ENCODE measurements at regions of chr11 and their contacts with region 1.

Region 1: DNA sequence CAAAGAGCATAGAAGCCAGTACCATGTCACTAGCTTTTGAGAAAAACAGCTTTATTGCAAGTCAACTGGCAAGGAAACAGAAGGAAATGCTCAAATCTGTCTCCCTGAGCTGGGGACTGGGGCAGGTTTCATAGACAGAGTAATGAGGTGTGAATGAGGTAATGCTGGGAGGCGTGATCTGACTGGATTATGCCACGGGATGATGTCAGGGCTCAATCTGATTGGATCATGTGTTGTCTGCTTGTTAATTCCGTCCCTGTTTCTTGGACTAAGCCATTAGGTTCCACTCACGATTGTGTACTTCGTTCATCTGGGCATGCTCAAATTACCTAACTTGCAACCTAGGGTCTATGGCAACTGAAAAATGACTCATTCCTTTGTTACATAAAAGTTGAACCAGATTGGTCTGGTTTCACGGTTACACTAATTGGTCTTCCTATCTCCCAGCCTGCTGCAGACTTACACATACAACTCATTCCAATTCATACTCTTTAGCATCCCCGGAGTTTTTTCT is 20.2 kb upstream of the OR10A5 start:
- DNase-seq: no peak
- H3K27ac ChIP-seq: no peak overlapping the region
- CTCF ChIP-seq: no peak

Region 2: DNA sequence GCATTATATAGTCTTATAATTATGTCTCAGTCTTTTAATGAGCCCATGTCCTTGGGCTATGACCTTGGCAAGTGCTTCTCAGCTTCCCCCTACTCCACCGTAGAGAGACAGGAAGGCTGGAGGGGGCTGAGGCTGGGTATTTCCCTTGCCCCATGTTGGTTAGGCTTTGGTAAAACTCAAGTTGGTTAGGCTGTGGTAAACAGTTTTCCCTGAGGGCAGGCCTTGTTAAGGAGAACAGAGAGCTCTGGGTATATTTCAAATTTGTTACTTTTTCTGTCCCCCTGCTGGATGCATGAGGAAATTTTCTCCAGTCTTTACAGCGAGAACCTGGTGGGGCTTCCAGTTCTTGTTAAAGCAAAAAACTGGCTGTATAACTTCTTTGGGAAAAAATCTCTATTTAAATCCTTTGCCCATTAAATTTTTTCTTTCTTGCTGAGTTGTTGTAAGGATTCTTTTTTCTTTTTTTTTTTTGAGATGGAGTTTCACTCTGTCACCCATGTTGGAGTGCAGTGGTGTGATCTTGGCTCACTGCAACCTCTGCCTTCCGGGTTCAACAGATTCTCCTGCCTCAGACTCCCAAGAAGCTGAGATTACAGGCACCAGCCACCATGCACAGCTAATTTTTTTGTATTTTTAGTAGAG is 157.4 kb before region 1 on chr11:
- CTCF ChIA-PET with region 1: interaction called, 10 read pairs
- POLR2A ChIA-PET with region 1: no interaction called
- DNase-seq: peak; percentile 19
- H3K27ac ChIP-seq: no peak overlapping the region
- CTCF ChIP-seq: peak; percentile 42

Region 3: DNA sequence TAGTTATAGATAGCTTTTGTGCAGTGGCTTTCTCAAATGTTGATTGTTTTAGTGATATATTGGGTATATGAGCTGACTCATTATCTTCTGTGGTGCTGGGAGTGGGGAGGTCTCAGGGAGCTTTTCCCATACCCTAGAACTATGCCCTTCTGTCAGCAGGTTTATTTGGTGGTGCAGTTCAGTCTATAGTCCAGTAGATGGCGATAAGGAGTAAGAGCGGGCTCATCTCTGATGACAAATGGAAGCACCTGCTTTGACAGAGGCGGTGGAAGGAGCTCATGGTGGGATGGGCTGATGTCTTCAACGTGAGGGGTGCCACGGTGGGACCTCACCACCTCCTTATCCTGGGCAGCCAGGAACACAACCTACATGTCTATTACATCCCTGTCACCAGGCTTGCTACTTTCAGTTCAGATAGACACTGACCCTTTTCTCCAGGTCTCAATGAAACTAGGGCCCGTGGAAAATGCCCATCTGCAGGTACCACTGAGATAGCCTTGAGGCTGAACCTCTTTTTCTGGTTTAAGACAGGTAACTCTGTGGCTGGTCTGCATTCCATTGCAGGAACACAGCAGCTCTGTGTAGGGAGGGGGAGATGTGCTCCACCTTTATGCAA is 12.8 kb before region 1 on chr11:
- CTCF ChIA-PET with region 1: interaction called, 13 read pairs
- POLR2A ChIA-PET with region 1: no interaction called
- DNase-seq: peak; percentile 32
- H3K27ac ChIP-seq: no peak overlapping the region
- CTCF ChIP-seq: peak; percentile 90